ENCODE measurements at regions of chr12 and their contacts with region 1.

Region 1: DNA sequence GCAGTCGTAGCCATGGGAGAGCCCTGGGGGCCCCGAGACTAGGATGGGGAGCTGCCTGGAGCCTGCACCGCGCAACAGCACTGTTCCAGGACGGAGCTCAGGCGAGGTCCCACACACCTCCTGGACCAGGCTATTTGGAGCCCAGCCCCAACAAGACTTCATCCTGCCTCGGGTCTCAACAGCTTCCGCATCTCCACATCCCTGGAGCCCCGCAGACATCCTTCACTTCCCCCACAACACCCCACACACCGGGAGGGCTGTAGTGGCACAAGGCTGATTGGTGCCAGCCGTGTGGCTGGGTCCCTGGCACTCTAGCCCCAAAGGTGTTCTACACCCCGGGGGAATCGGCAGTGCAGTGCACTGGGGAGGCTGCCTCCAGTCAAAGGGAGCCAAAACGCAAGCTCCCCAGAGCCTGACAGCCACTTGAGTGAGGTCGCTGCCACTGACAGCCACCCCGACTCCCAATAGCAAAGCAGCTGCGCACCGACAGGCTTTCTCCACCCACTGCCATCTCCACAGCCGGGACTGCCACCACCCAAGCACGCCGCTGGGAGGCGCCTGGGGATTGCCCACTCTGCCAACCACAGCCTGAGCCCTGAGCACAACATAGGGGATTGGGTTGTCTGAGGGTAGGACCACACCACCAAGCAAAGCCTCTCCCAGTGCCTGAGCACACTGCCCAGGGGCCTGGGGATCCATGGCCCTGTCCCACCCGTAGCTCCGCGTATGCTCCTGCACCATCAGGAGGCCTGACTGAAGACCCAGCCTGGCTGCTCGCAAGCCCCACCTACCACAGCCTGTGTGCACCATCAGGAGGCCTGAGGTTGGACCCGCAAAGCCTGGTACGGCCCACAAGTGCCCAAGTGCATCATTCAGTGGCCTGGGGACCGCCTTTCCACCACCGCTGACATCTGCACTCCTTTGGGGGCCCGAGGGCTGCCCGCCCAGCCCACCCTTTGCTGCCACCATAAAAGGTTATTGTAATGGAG is 13.2 kb upstream of the KLRF1 start:
- DNase-seq: peak; percentile 89
- H3K4me3 Mint-ChIP-seq: peak overlapping the region; percentile 73
- H3K27ac Mint-ChIP-seq: peak overlapping the region; percentile 23
- H3K4me1 Mint-ChIP-seq: peaks cover 27% of the 10 kb centered on the region
- H3K27me3 Mint-ChIP-seq: peaks cover 25% of the 10 kb centered on the region

Region 2: GRCh38 chr12:9750276-9751203 is 63.6 kb before region 1 on chr12:
- CTCF ChIA-PET with region 1: interaction called, 232 read pairs
- POLR2A ChIA-PET with region 1: interaction called, 4 read pairs
- DNase-seq: peak; percentile 61
- H3K4me3 Mint-ChIP-seq: peak overlapping the region; percentile 15
- H3K27ac Mint-ChIP-seq: peak overlapping the region; percentile 5
- H3K4me1 Mint-ChIP-seq: peaks cover 55% of the 10 kb centered on the region
- H3K27me3 Mint-ChIP-seq: no peaks in the 10 kb centered on the region

Region 3: DNA sequence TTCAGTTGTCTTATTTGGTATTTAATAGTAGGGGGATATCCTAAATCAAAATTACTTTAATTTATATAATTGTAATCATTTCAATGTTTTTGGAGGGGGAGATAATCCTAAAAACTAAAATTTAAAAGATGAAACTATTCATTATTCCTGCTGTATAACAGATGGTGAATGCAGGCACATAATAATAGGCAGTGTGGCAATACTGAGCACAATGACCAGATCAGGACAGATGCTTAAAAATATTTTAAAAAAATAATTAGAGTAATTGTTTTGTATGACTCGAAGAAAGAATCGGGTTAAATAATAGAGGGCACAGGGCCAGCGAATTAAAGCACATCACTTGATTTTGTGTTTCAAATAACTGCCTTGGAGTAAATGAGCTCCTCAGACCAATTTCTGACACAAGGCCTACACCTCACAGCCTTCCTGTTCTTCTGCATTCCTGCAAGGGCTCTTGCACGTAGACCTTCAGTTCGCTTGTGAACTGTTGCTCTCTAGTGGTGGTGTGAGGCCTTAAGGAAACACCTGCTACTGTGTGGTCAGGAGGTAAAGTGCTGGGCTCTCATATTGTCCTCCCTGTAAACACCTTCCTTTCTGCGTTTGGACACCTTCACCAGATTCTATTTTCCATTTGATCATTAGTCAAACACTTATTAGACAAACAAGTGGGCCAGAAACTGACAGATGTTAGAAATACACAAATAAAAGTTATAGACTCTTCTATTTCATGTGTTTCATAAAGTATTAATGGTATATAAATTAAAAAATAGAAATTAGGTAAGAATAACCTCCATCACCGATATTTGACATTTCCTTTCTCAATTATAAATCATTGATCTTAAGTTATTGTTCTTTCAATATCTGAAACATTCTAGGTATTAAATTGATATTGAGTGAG is 16.1 kb before region 1 on chr12:
- CTCF ChIA-PET with region 1: interaction called, 37 read pairs
- POLR2A ChIA-PET with region 1: interaction called, 7 read pairs
- DNase-seq: peak; percentile 76
- H3K4me3 Mint-ChIP-seq: no peak overlapping the region
- H3K27ac Mint-ChIP-seq: peak overlapping the region; percentile 92
- H3K4me1 Mint-ChIP-seq: peaks cover 47% of the 10 kb centered on the region
- H3K27me3 Mint-ChIP-seq: peaks cover 15% of the 10 kb centered on the region

Region 4: DNA sequence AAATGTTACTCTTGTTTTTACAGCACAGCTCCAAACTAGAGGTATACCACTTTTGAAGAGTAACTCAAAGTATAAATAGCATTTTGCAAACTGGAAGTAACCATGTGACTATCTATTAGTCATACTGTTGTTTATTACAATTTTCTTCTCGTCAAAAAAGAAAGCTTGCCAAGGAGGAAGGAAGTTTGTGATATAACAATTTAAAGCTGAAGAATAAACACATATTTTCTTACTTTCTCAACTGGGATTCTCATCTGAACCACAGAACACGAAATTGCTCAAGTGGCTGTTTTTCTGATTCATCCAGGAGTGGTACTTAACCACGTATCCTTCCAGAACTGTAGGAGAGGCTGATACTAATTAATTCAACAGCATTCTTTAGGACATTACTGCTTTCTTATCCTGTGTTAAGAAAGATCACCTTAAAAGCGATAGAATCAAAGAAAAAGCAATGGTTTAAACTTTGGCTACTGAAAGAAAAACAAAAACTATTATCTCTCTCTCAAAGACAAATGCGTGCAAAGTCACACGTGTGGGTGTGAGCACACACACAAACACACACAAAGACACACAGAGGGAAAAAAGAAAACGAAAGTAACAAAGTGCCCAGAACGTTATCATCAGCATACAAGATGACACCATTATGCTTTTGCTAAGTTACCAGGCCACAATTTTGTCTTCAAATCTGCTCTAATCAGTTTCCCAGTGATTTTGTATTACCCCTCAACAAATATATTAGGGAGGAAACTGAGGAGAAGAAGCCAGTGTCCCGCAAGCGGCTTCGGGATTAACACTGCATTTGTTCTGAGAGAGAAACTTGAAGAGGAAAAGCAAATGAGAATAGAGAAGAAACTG is 55.4 kb after region 1 on chr12 and contains the start of gene CLEC2B:
- CTCF ChIA-PET with region 1: interaction called, 15 read pairs
- POLR2A ChIA-PET with region 1: interaction called, 18 read pairs
- DNase-seq: no peak
- H3K4me3 Mint-ChIP-seq: peak within 1 kb of the TSS; percentile 85
- H3K27ac Mint-ChIP-seq: peak within 1 kb of the TSS; percentile 92
- H3K4me1 Mint-ChIP-seq: peaks cover 19% of the 10 kb centered on the region
- H3K27me3 Mint-ChIP-seq: no peaks in the 10 kb centered on the region
- total RNA-seq, gene CLEC2B: 79.6 to 79.7 TPM

Region 5: DNA sequence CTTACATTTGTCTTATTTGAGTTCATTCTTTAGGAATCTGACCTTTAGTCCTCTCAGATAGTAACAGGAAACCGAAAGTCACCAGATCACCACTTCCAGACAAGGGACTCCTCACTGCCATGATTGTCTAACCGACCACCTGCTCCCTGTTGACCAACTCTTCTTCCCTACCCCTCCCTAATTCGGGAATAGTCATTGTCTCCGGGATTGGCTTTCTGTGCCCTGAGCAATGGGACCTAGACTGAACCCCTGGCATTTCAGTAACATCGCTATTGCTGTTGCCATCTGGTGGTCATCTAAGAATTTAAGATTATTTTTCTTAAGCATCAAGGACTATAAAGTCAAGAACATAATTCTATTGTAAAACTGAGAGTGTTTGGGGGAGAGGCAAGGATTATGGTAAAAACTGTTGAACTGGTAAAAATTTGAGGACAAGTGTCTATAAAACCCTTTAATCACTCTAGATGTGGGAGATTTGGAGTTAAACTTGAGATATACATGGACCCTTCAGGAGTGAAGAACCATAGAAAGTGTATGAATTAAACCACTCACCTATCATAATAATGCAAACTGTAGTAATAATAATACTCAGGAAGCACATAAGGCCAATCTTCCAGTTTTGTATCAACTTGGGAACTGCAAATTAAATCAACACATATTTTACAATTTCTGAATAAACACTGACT is 111.7 kb after region 1 on chr12:
- CTCF ChIA-PET with region 1: interaction called, 29 read pairs
- POLR2A ChIA-PET with region 1: no interaction called
- DNase-seq: peak; percentile 22
- H3K4me3 Mint-ChIP-seq: peak overlapping the region; percentile 31
- H3K27ac Mint-ChIP-seq: no peak overlapping the region
- H3K4me1 Mint-ChIP-seq: peaks cover 17% of the 10 kb centered on the region
- H3K27me3 Mint-ChIP-seq: peaks cover 12% of the 10 kb centered on the region

Region 6: DNA sequence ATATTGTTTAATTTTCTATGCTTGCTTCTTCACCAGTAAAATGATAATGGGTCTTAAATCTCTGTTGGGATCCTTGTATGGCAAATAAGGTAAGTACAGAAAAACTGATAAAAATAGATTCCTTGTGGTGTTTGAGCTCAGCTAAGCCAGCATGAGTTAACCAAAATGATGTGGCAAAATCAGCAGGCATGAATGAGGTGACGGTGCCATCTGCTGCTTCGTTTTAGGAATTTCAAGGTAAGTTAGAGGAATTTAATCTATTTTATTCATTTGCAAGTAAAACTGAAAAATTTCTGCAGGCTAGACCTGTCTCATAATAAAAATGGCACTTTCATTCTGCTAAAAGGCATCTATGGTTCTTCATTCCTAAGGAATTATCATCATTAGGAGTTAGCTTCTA is 325.9 kb after region 1 on chr12:
- CTCF ChIA-PET with region 1: interaction called, 16 read pairs
- POLR2A ChIA-PET with region 1: no interaction called
- DNase-seq: peak; percentile 54
- H3K4me3 Mint-ChIP-seq: no peak overlapping the region
- H3K27ac Mint-ChIP-seq: no peak overlapping the region
- H3K4me1 Mint-ChIP-seq: no peaks in the 10 kb centered on the region
- H3K27me3 Mint-ChIP-seq: peaks cover 18% of the 10 kb centered on the region